CD8-positive, alpha-beta T cell (primary cell): ENCODE measurements at regions of chr20 and their contacts with region 1.

Region 1: GRCh38 chr20:10427060-10427692 is 6.8 kb downstream of the MKKS start:
- DNase-seq: peak in 7 of 9 experiments; percentile 20 to 65 (median 51)
- ATAC-seq: no peak
- H3K4me3 ChIP-seq: no peak overlapping the region
- H3K4me3 Mint-ChIP-seq: no peak overlapping the region
- H3K27ac ChIP-seq: no peak overlapping the region
- H3K27ac Mint-ChIP-seq: no peak overlapping the region
- H3K4me1 ChIP-seq: peaks cover 7% of the 10 kb centered on the region
- H3K4me1 Mint-ChIP-seq: peaks cover 54% of the 10 kb centered on the region
- H3K27me3 ChIP-seq: no peaks in the 10 kb centered on the region
- H3K27me3 Mint-ChIP-seq: no peaks in the 10 kb centered on the region
- CTCF ChIP-seq: peak; percentile 86

Region 2: GRCh38 chr20:9616833-9617489 is 810.2 kb before region 1 on chr20:
- CTCF ChIA-PET with region 1: interaction called, 4 read pairs
- POLR2A ChIA-PET with region 1: no interaction called
- intact Hi-C with region 1: loop called (anchors 2 to 10 kb)
- DNase-seq: peak in 8 of 9 experiments; percentile 7 to 62 (median 42)
- ATAC-seq: peak; percentile 36
- H3K4me3 ChIP-seq: no peak overlapping the region
- H3K4me3 Mint-ChIP-seq: no peak overlapping the region
- H3K27ac ChIP-seq: no peak overlapping the region
- H3K27ac Mint-ChIP-seq: no peak overlapping the region
- H3K4me1 ChIP-seq: no peaks in the 10 kb centered on the region
- H3K4me1 Mint-ChIP-seq: no peaks in the 10 kb centered on the region
- H3K27me3 ChIP-seq: no peaks in the 10 kb centered on the region
- H3K27me3 Mint-ChIP-seq: peaks cover 2% of the 10 kb centered on the region
- CTCF ChIP-seq: peak; percentile 66

Region 3: GRCh38 chr20:10412591-10413408 is 14.4 kb before region 1 on chr20:
- CTCF ChIA-PET with region 1: interaction called, 13 read pairs
- POLR2A ChIA-PET with region 1: no interaction called
- intact Hi-C with region 1: no loop called
- DNase-seq: no peak
- ATAC-seq: no peak
- H3K4me3 ChIP-seq: no peak overlapping the region
- H3K4me3 Mint-ChIP-seq: no peak overlapping the region
- H3K27ac ChIP-seq: no peak overlapping the region
- H3K27ac Mint-ChIP-seq: no peak overlapping the region
- H3K4me1 ChIP-seq: no peaks in the 10 kb centered on the region
- H3K4me1 Mint-ChIP-seq: peaks cover 7% of the 10 kb centered on the region
- H3K27me3 ChIP-seq: no peaks in the 10 kb centered on the region
- H3K27me3 Mint-ChIP-seq: no peaks in the 10 kb centered on the region
- CTCF ChIP-seq: no peak